Activated CD8-positive, alpha-beta T cell treated with anti-CD3 and anti-CD28 coated beads, Interleukin-2, amount 10 ng/mL, durations not matched to agents 7 days and 5 days (primary cell): ENCODE measurements at regions of chr17 and their contacts with region 1.

Region 1: GRCh38 chr17:40531051-40531991 is 29.9 kb upstream of the TNS4 start:
- DNase-seq: no peak
- ATAC-seq: no peak
- H3K4me3 Mint-ChIP-seq: no peak overlapping the region
- H3K27ac Mint-ChIP-seq: peak overlapping the region; percentile 92
- H3K4me1 Mint-ChIP-seq: peaks cover 91% of the 10 kb centered on the region
- H3K27me3 Mint-ChIP-seq: no peaks in the 10 kb centered on the region

Region 2: DNA sequence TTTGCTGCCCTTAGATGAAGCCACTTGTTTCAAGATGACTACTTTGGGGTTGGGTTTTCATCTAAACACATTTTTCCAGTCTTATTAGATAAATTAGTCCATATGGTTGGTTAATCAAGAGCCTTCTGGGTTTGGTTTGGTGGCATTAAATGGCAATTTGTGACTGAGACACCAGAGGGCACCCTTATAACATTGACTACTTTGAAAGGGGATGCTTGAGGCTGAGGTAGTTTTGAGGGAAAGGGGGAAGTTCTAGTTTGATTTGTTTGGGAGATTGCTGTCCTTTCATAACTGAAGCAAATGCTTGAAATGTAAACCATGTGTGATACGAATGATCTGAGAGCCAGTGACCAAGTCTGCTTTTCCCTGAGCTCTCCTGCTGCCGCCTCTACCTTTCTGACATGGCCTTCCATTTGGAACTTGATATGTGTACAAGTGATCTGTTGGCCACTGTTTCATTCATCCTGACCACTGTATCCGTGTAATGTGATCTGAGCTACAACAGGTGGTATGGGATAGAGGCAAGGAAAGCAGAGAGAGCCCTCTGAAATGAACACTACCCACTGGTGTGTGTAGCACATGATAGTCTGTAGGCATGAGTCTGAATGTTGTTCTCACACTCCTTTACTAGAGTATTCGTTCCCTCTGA is 228.2 kb before region 1 on chr17:
- CTCF ChIA-PET with region 1: interaction called, 15 read pairs
- POLR2A ChIA-PET with region 1: no interaction called
- DNase-seq: peak; percentile 63
- ATAC-seq: no peak
- H3K4me3 Mint-ChIP-seq: no peak overlapping the region
- H3K27ac Mint-ChIP-seq: no peak overlapping the region
- H3K4me1 Mint-ChIP-seq: peaks cover 18% of the 10 kb centered on the region
- H3K27me3 Mint-ChIP-seq: no peaks in the 10 kb centered on the region

Region 3: GRCh38 chr17:40399185-40399584 is 132.1 kb before region 1 on chr17:
- CTCF ChIA-PET with region 1: interaction called, 42 read pairs
- POLR2A ChIA-PET with region 1: interaction called, 4 read pairs
- DNase-seq: no peak
- ATAC-seq: peak; percentile 67
- H3K4me3 Mint-ChIP-seq: no peak overlapping the region
- H3K27ac Mint-ChIP-seq: no peak overlapping the region
- H3K4me1 Mint-ChIP-seq: peaks cover 24% of the 10 kb centered on the region
- H3K27me3 Mint-ChIP-seq: no peaks in the 10 kb centered on the region

Region 4: GRCh38 chr17:40427002-40427491 is 104.3 kb before region 1 on chr17:
- CTCF ChIA-PET with region 1: interaction called, 32 read pairs
- POLR2A ChIA-PET with region 1: interaction called, 6 read pairs
- DNase-seq: peak; percentile 63
- ATAC-seq: peak; percentile 93
- H3K4me3 Mint-ChIP-seq: peak overlapping the region; percentile 3
- H3K27ac Mint-ChIP-seq: peak overlapping the region; percentile 83
- H3K4me1 Mint-ChIP-seq: peaks cover 36% of the 10 kb centered on the region
- H3K27me3 Mint-ChIP-seq: peaks cover 11% of the 10 kb centered on the region

Region 5: DNA sequence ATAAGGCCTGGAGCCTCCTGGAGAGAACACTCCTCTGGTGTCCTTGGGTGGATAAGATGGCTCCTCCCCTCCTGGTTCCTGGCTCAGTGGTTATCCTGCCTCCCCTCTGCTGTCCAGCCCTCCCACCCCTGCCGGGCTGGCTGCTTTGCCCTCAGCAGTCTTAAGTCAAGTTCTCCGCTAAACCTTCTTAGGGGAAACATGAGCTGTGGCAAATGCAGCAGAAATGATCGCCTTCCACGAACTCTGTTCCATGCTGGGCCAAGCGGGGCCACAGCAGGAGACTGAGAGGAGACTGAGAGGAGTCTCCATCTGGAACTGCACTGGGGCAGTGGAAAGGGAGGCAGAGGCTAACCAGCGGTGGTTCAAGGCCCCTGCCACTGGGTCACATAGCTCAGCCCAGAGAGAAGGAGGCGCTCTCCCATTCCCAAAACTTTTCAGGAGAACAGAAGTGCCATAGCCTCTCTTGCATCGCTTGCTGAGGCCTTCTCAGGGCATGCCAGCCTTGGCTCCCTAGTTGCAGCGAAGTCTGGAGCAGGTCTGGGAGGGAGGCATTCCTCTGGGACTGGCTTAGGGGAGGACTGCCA is 56.8 kb before region 1 on chr17:
- CTCF ChIA-PET with region 1: interaction called, 82 read pairs
- POLR2A ChIA-PET with region 1: interaction called, 32 read pairs
- DNase-seq: no peak
- ATAC-seq: no peak
- H3K4me3 Mint-ChIP-seq: no peak overlapping the region
- H3K27ac Mint-ChIP-seq: peak overlapping the region; percentile 46
- H3K4me1 Mint-ChIP-seq: peaks cover 34% of the 10 kb centered on the region
- H3K27me3 Mint-ChIP-seq: peaks cover 5% of the 10 kb centered on the region

Region 6: DNA sequence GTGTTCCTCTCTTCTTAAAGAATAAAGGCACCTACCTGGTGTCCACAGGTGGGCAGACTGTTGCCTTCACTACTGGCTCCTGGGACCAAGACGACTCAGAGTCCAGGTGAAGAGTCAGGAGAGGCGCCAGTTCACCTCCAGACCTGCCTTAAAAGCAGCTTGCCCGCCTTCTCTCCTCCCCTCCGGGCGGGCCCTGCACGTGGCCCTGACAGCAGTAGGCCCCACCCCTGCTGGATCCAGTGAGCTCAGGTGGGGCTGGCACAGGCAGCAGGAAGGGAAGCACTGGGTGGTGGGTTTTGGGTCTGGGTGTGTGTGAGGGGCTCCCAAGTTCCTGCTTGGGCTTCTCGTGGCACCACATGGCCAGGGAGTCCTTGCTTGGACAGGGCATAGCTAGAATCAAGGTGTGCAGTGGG is 29.8 kb before region 1 on chr17 and contains the start of gene TNS4:
- CTCF ChIA-PET with region 1: interaction called, 10 read pairs
- POLR2A ChIA-PET with region 1: interaction called, 3 read pairs
- DNase-seq: no peak
- ATAC-seq: no peak
- H3K4me3 Mint-ChIP-seq: no peak within 1 kb of the TSS
- H3K27ac Mint-ChIP-seq: no peak within 1 kb of the TSS
- H3K4me1 Mint-ChIP-seq: peaks cover 6% of the 10 kb centered on the region
- H3K27me3 Mint-ChIP-seq: peaks cover 5% of the 10 kb centered on the region
- total RNA-seq, gene TNS4: 8.4 to 9.0 TPM

Region 7: GRCh38 chr17:40548982-40549685 is 17.8 kb after region 1 on chr17:
- CTCF ChIA-PET with region 1: interaction called, 618 read pairs
- POLR2A ChIA-PET with region 1: interaction called, 328 read pairs
- DNase-seq: peak; percentile 25
- ATAC-seq: no peak
- H3K4me3 Mint-ChIP-seq: peak overlapping the region; percentile 59
- H3K27ac Mint-ChIP-seq: peak overlapping the region; percentile 93
- H3K4me1 Mint-ChIP-seq: peaks cover 92% of the 10 kb centered on the region
- H3K27me3 Mint-ChIP-seq: no peaks in the 10 kb centered on the region

Region 8: DNA sequence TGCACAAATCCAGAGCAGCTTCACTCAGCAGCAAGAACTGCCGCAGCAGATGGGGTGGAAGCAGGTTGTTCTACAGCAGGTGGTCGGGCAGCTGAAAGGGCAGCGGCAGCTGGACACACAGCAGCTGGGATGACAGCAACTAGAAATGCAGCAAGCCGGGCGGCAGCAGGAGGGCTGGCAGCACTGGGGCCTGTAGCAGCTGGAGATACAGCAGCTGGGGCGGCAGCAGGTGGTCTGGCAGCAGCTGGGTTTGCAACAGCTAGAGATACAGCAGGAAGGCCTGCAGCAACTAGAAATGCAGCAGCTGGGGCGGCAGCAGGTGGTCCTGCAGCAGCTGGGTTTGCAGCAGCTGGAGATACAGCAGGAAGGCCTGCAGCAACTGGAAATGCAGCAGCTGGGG is 636.2 kb after region 1 on chr17:
- CTCF ChIA-PET with region 1: no interaction called
- POLR2A ChIA-PET with region 1: no interaction called
- DNase-seq: no peak
- ATAC-seq: no peak
- H3K4me3 Mint-ChIP-seq: no peak overlapping the region
- H3K27ac Mint-ChIP-seq: no peak overlapping the region
- H3K4me1 Mint-ChIP-seq: no peaks in the 10 kb centered on the region
- H3K27me3 Mint-ChIP-seq: peaks cover 8% of the 10 kb centered on the region